CD4-positive, alpha-beta memory T cell (primary cell): ENCODE measurements at regions of chr6 and their contacts with region 1.

Region 1: DNA sequence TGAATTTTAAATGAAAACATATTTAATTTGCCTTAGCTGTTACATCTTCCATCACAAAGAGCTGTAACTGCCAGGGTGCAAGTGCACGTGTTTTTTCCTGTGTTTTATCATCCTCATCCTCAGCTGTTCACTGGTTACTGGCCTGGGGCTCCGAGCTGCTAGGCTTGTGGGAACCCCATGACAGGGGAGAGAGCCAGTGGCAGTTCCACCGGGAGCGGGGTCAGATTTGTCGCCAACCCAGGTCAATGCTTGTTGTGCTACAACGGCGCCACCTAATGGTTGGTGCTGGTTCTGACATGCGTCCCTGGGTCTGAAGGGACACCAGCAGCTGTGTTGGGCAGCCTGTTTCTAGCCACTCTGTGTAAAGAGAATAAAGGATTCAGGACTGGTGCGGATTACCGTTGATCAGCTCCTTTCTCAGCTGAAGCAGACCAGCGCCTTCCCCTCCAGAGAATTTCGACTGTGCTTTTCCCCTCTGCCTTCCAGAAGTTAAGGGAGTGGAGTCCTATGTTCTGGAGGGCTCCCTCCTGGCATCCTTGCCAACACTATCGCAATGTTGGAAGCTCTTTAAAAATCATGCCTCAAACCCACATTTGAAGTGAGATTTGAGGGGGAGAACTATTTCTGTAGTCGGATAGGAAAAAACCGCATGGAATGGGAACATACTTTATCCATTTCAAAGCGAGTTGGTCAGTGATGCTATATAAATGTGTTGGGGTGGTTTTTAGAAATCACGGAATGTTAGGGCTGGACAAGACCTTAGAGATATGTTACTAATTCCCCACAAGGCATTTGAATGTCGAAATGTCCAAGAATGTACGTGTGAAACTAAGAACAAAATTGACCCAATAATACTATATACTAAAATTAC is 32.1 kb downstream of the SUMO4 start:
- DNase-seq: peak; percentile 75 to 83 (median 80)
- H3K4me3 ChIP-seq: peak overlapping the region in 1 of 2 donors; percentile 3
- H3K4me3 Mint-ChIP-seq: peak overlapping the region in 7 of 8 donors; percentile 72 to 84 (median 80)
- H3K27ac ChIP-seq: no peak overlapping the region
- H3K27ac Mint-ChIP-seq: peak overlapping the region in 6 of 7 donors; percentile 56 to 93 (median 76)
- H3K4me1 ChIP-seq: peaks cover 8% of the 10 kb centered on the region
- H3K4me1 Mint-ChIP-seq: peaks cover 4 to 9% (median 6%) of the 10 kb centered on the region in 4 donors
- H3K27me3 ChIP-seq: no peaks in the 10 kb centered on the region
- H3K27me3 Mint-ChIP-seq: no peaks in the 10 kb centered on the region

Region 2: DNA sequence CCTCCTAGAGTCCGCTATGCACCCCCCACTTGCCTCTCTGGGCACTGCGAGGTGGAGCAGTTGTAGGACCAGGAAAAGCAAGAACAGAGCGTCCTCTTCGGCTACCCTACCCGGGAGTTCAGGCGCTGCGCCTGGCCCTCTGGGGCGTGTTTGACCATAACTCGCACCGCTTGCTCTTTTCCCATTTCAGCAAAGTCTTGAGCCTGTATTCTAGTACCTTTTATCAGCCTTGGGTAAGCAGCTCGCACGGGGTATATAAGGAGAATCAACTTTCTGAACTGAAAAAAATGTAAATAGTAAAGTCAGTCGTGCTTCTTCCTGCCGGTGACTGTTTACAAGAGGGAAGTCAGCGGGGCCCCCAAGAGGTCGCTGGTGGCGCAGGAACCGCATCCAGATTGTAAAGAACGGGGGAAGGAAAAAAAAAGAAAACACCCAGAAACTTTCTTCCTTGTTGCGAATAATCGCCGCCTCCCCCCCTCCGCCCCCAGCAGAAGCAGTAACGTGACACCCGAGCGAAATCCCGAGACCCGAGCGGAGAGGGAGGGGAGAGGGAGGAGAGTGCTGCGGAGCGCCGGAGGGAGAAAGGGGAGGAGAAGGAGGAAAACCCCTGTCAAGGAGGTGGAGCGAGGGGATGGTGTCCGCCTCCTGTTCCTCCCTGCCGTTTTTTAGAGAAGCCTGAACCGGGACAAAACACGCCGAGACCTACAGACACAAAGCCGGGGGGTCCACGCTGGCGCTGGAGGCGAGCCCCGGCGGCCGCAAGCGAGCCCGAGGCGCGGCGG is 685.6 kb before region 1 on chr6 and contains the start of gene UST:
- CTCF ChIA-PET with region 1: interaction called, 7 read pairs
- POLR2A ChIA-PET with region 1: no interaction called
- intact Hi-C with region 1: loop called (anchors 1 kb)
- DNase-seq: peak; percentile 75 to 86 (median 81)
- H3K4me3 ChIP-seq: peak within 1 kb of the TSS; percentile 31 to 71
- H3K4me3 Mint-ChIP-seq: peak within 1 kb of the TSS; percentile 93 to 99 (median 96)
- H3K27ac ChIP-seq: peak within 1 kb of the TSS; percentile 67
- H3K27ac Mint-ChIP-seq: peak within 1 kb of the TSS; percentile 93 to 97 (median 96)
- H3K4me1 ChIP-seq: peaks cover 35% of the 10 kb centered on the region
- H3K4me1 Mint-ChIP-seq: peaks cover 22 to 48% (median 40%) of the 10 kb centered on the region in 4 donors
- H3K27me3 ChIP-seq: no peaks in the 10 kb centered on the region
- H3K27me3 Mint-ChIP-seq: no peaks in the 10 kb centered on the region
- total RNA-seq, gene UST: 7.0 to 7.6 TPM

Region 3: DNA sequence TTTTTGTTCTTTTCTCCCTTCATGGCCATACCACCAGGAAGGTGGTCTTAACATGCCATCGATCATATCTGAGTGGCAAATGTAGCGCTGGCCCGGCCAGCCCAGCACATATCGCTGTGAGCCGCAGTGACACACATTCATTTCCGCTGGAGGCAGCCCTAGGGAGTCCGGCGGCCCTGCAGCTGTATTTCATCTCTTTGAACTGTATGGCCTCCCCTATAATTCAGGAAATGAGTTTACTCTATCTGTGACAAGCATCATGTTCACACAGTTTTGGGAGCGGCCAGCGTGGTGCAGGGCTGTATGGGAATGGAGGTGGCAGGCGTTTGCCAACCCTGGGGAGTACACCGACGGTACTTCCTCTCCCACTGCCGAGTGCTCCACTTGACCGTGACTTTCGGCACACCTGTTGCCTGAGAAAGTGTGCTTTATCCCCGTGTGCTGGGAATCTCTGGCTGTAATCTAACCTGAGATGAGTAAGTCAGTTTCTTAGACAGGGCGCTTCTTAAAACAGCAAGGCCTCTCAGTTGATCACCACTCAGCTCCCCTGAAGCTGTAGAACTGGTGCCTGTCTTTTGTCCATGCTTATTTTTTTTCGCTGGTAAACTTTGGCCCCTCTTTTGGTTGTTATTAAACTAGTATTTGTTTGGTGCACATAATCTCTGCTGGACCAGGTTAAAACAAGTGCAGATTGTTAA is 371.7 kb before region 1 on chr6:
- CTCF ChIA-PET with region 1: interaction called, 15 read pairs
- POLR2A ChIA-PET with region 1: no interaction called
- intact Hi-C with region 1: no loop called
- DNase-seq: peak; percentile 53 to 75 (median 62)
- H3K4me3 ChIP-seq: peak overlapping the region in 1 of 2 donors; percentile 34
- H3K4me3 Mint-ChIP-seq: peak overlapping the region; percentile 65 to 87 (median 80)
- H3K27ac ChIP-seq: peak overlapping the region; percentile 47
- H3K27ac Mint-ChIP-seq: peak overlapping the region; percentile 93 to 96 (median 94)
- H3K4me1 ChIP-seq: peaks cover 46% of the 10 kb centered on the region
- H3K4me1 Mint-ChIP-seq: peaks cover 27 to 52% (median 34%) of the 10 kb centered on the region in 4 donors
- H3K27me3 ChIP-seq: no peaks in the 10 kb centered on the region
- H3K27me3 Mint-ChIP-seq: no peaks in the 10 kb centered on the region

Region 4: DNA sequence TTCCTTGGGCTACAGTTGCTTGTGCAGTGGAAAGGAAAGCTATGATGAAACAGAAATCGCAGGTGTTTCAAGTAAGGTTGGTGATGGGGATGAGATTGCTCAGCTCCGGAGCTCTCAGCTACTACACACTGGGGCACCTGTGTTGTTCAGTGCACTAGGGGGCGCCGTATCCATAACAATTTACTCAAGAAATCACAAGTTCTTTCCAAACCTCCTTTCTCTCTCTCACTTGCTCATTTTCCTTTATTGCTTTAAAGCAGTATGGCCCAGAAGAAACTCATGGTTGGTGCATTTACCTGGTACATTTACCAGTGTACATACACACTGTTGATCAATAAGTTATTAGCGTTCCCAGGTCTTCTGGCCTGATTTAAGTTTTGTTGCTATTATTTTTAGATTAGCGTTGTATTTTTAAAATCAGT is 349.8 kb before region 1 on chr6:
- CTCF ChIA-PET with region 1: interaction called, 83 read pairs
- POLR2A ChIA-PET with region 1: interaction called, 13 read pairs
- intact Hi-C with region 1: loop called (anchors 1 kb)
- DNase-seq: peak; percentile 76 to 86 (median 77)
- H3K4me3 ChIP-seq: no peak overlapping the region
- H3K4me3 Mint-ChIP-seq: peak overlapping the region in 4 of 8 donors; percentile 0 to 46 (median 25)
- H3K27ac ChIP-seq: no peak overlapping the region
- H3K27ac Mint-ChIP-seq: peak overlapping the region in 4 of 7 donors; percentile 12 to 85 (median 68)
- H3K4me1 ChIP-seq: peaks cover 40% of the 10 kb centered on the region
- H3K4me1 Mint-ChIP-seq: peaks cover 31 to 50% (median 38%) of the 10 kb centered on the region in 4 donors
- H3K27me3 ChIP-seq: no peaks in the 10 kb centered on the region
- H3K27me3 Mint-ChIP-seq: no peaks in the 10 kb centered on the region

Region 5: GRCh38 chr6:149233056-149233715 is 199.0 kb before region 1 on chr6:
- CTCF ChIA-PET with region 1: interaction called, 11 read pairs
- POLR2A ChIA-PET with region 1: no interaction called
- intact Hi-C with region 1: no loop called
- DNase-seq: peak; percentile 57 to 78 (median 74)
- H3K4me3 ChIP-seq: peak overlapping the region; percentile 2 to 18
- H3K4me3 Mint-ChIP-seq: peak overlapping the region; percentile 24 to 94 (median 82)
- H3K27ac ChIP-seq: peak overlapping the region; percentile 83
- H3K27ac Mint-ChIP-seq: peak overlapping the region; percentile 94 to 100 (median 98)
- H3K4me1 ChIP-seq: peaks cover 43% of the 10 kb centered on the region
- H3K4me1 Mint-ChIP-seq: peaks cover 44 to 68% (median 55%) of the 10 kb centered on the region in 4 donors
- H3K27me3 ChIP-seq: no peaks in the 10 kb centered on the region
- H3K27me3 Mint-ChIP-seq: no peaks in the 10 kb centered on the region

Region 6: GRCh38 chr6:149443411-149444181 is 11.5 kb after region 1 on chr6:
- CTCF ChIA-PET with region 1: interaction called, 23 read pairs
- POLR2A ChIA-PET with region 1: interaction called, 3 read pairs
- intact Hi-C with region 1: no loop called
- DNase-seq: no peak
- H3K4me3 ChIP-seq: no peak overlapping the region
- H3K4me3 Mint-ChIP-seq: no peak overlapping the region
- H3K27ac ChIP-seq: no peak overlapping the region
- H3K27ac Mint-ChIP-seq: peak overlapping the region in 1 of 7 donors; percentile 48
- H3K4me1 ChIP-seq: no peaks in the 10 kb centered on the region
- H3K4me1 Mint-ChIP-seq: peaks cover 0 to 13% (median 5%) of the 10 kb centered on the region in 4 donors
- H3K27me3 ChIP-seq: no peaks in the 10 kb centered on the region
- H3K27me3 Mint-ChIP-seq: no peaks in the 10 kb centered on the region

Region 7: GRCh38 chr6:150037526-150038201 is 605.5 kb after region 1 on chr6:
- CTCF ChIA-PET with region 1: no interaction called
- POLR2A ChIA-PET with region 1: no interaction called
- intact Hi-C with region 1: no loop called
- DNase-seq: no peak
- H3K4me3 ChIP-seq: peak overlapping the region in 1 of 2 donors; percentile 17
- H3K4me3 Mint-ChIP-seq: peak overlapping the region in 7 of 8 donors; percentile 63 to 85 (median 79)
- H3K27ac ChIP-seq: no peak overlapping the region
- H3K27ac Mint-ChIP-seq: no peak overlapping the region
- H3K4me1 ChIP-seq: peaks cover 16% of the 10 kb centered on the region
- H3K4me1 Mint-ChIP-seq: peaks cover 9 to 19% (median 14%) of the 10 kb centered on the region in 4 donors
- H3K27me3 ChIP-seq: peaks cover 42% of the 10 kb centered on the region
- H3K27me3 Mint-ChIP-seq: peaks cover 52 to 69% of the 10 kb centered on the region in 2 donors